Panc1 (cell line): ENCODE measurements at regions of chr4 and their contacts with region 1.

Region 1: GRCh38 chr4:14667624-14668151 is 334.6 kb upstream of the CPEB2 start:
- DNase-seq: no peak
- ATAC-seq: no peak
- H3K4me3 ChIP-seq: no peak overlapping the region
- H3K27ac ChIP-seq: no peak overlapping the region
- H3K4me1 ChIP-seq: no peaks in the 10 kb centered on the region
- H3K27me3 ChIP-seq: no peaks in the 10 kb centered on the region
- CTCF ChIP-seq: no peak

Region 2: GRCh38 chr4:14345356-14345775 is 322.3 kb before region 1 on chr4:
- CTCF ChIA-PET with region 1: no interaction called
- POLR2A ChIA-PET with region 1: interaction called, 13 read pairs
- in situ Hi-C with region 1: no loop called
- intact Hi-C with region 1: no loop called
- DNase-seq: no peak
- ATAC-seq: no peak
- H3K4me3 ChIP-seq: no peak overlapping the region
- H3K27ac ChIP-seq: no peak overlapping the region
- H3K4me1 ChIP-seq: no peaks in the 10 kb centered on the region
- H3K27me3 ChIP-seq: no peaks in the 10 kb centered on the region
- CTCF ChIP-seq: no peak

Region 3: DNA sequence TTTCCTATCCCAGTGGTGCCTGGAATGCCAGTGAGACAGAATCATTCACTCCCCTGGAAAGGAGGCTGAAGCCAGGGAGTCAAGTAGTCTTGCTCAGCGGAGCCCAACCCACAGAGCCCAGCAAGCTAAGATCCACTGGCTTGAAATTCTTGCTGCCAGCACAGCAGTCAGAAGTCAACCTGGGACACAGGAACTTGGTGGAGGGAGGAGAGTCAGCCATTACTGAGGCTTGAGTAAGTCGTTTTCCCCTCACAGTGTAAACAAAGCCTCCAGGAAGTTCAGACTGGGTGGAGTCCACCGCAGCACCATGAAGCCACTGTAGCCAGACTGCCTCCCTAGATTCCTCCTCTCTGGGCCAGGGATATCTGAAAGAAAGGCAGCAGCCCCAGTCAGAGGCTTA is 51.4 kb after region 1 on chr4:
- CTCF ChIA-PET with region 1: no interaction called
- POLR2A ChIA-PET with region 1: no interaction called
- in situ Hi-C with region 1: no loop called
- intact Hi-C with region 1: no loop called
- DNase-seq: no peak
- ATAC-seq: no peak
- H3K4me3 ChIP-seq: no peak overlapping the region
- H3K27ac ChIP-seq: no peak overlapping the region
- H3K4me1 ChIP-seq: no peaks in the 10 kb centered on the region
- H3K27me3 ChIP-seq: no peaks in the 10 kb centered on the region
- CTCF ChIP-seq: no peak

Region 4: GRCh38 chr4:15162465-15163283 is 495.0 kb after region 1 on chr4:
- CTCF ChIA-PET with region 1: no interaction called
- POLR2A ChIA-PET with region 1: no interaction called
- in situ Hi-C with region 1: no loop called
- intact Hi-C with region 1: no loop called
- DNase-seq: no peak
- ATAC-seq: no peak
- H3K4me3 ChIP-seq: no peak overlapping the region
- H3K27ac ChIP-seq: no peak overlapping the region
- H3K4me1 ChIP-seq: no peaks in the 10 kb centered on the region
- H3K27me3 ChIP-seq: no peaks in the 10 kb centered on the region
- CTCF ChIP-seq: peak; percentile 30